SK-N-SH (cell line): ENCODE measurements at regions of chr12 and their contacts with region 1.

Region 1: GRCh38 chr12:113462117-113462774 is 9.4 kb downstream of the LHX5 start:
- DNase-seq: peak; percentile 87
- H3K4me3 ChIP-seq: peak overlapping the region; percentile 18 to 44; a peak in 3 of 4 replicates
- H3K27ac ChIP-seq: no peak overlapping the region
- H3K4me1 ChIP-seq: no peaks in the 10 kb centered on the region; a peak in 1 of 4 replicates
- H3K27me3 ChIP-seq: peaks cover 65% of the 10 kb centered on the region
- CTCF ChIP-seq: peak; percentile 82
- EP300 ChIP-seq: no peak
- RAD21 ChIP-seq: peak; percentile 75

Region 2: DNA sequence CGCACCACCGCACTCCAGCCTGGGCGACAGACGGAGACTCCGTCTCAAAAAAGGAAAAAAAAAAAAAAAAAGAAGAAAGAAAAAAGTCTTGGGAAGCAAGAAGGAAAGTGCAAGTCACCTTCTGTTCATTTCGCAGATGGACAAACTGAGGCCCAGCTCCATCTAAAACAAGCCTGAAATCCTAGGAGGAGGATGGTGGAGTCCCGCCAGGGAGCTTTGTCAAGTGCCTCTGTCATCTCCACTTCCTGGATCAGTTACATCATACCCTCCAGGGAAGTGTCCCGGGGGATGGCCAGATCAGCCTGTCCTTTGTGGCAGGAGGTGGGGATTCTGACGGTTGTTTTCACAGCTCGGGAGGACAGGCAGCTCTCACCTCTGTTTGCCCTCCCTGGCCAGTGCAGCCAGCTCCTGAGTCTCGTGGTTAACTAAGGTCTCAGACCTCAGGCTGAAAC is 48.7 kb before region 1 on chr12:
- CTCF ChIA-PET with region 1: no interaction called
- POLR2A ChIA-PET with region 1: no interaction called
- DNase-seq: no peak
- H3K4me3 ChIP-seq: no peak overlapping the region
- H3K27ac ChIP-seq: no peak overlapping the region
- H3K4me1 ChIP-seq: no peaks in the 10 kb centered on the region
- H3K27me3 ChIP-seq: no peaks in the 10 kb centered on the region
- CTCF ChIP-seq: no peak
- EP300 ChIP-seq: no peak
- RAD21 ChIP-seq: no peak

Region 3: DNA sequence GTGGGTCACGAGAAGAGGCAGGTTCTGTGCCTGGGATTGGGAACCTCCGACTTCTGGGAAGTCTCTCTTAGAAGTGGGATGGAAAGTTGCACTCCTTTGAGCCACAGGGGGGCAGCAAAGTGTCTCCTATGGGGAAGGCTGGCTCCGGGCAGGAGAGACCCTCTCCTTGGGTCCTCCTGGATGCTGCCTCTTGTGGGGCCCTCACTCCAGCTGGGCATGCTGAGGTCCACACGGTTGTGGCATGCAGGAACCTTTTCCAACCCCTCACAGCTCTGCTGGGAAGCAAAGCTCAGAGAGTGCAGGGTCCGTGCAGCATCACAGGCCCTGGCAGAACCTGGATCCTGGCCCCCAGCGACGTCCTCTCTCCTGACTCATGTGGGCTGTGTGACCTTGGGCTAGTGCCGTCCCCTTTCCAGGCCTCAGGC is 22.6 kb before region 1 on chr12:
- CTCF ChIA-PET with region 1: interaction called, 23 read pairs
- POLR2A ChIA-PET with region 1: no interaction called
- DNase-seq: peak; percentile 80
- H3K4me3 ChIP-seq: no peak overlapping the region
- H3K27ac ChIP-seq: no peak overlapping the region
- H3K4me1 ChIP-seq: no peaks in the 10 kb centered on the region
- H3K27me3 ChIP-seq: no peaks in the 10 kb centered on the region
- CTCF ChIP-seq: peak; percentile 72
- EP300 ChIP-seq: no peak
- RAD21 ChIP-seq: peak; percentile 76

Region 4: GRCh38 chr12:113445544-113446171 is 16.6 kb before region 1 on chr12:
- CTCF ChIA-PET with region 1: interaction called, 23 read pairs
- POLR2A ChIA-PET with region 1: no interaction called
- DNase-seq: no peak
- H3K4me3 ChIP-seq: no peak overlapping the region
- H3K27ac ChIP-seq: no peak overlapping the region
- H3K4me1 ChIP-seq: no peaks in the 10 kb centered on the region
- H3K27me3 ChIP-seq: no peaks in the 10 kb centered on the region; the same call in 1 of the 2 replicates
- CTCF ChIP-seq: no peak
- EP300 ChIP-seq: no peak
- RAD21 ChIP-seq: no peak

Region 5: GRCh38 chr12:113479590-113480335 is 17.5 kb after region 1 on chr12:
- CTCF ChIA-PET with region 1: interaction called, 44 read pairs
- POLR2A ChIA-PET with region 1: no interaction called
- DNase-seq: peak; percentile 51
- H3K4me3 ChIP-seq: peak overlapping the region in 1 of 2 experiments; percentile 5; a peak in 1 of 4 replicates
- H3K27ac ChIP-seq: no peak overlapping the region
- H3K4me1 ChIP-seq: no peaks in the 10 kb centered on the region; a peak in 1 of 4 replicates
- H3K27me3 ChIP-seq: peaks cover 51% of the 10 kb centered on the region
- CTCF ChIP-seq: no peak
- EP300 ChIP-seq: no peak
- RAD21 ChIP-seq: no peak

Region 6: DNA sequence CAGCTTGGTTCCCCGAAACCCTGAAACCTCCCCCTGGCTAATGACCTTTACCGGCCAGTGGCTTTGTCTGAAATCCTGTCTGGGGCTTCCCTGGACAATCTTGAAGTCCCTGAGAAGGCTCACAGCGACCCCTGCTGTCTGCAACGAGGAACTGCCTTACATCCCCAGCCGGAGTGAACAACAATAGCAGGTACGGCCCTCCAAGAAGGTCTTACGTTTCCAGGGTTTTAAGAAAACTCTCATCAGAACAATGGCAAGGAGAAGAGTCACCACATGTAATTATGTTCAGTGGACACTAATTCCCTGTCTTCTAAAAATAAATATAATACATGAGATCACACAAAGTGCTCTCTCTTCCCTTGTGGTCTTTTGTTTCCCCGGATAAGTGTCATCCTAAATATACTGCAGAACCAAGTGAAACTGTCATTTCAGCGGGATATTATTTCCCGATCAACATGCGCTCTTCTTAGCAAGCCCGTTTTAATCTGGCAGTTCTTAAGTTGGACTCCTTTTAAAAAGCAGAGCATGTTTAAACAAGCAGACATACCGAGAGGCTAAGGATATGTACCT is 450.6 kb after region 1 on chr12:
- CTCF ChIA-PET with region 1: interaction called, 24 read pairs
- POLR2A ChIA-PET with region 1: no interaction called
- DNase-seq: peak; percentile 82
- H3K4me3 ChIP-seq: no peak overlapping the region
- H3K27ac ChIP-seq: no peak overlapping the region
- H3K4me1 ChIP-seq: no peaks in the 10 kb centered on the region
- H3K27me3 ChIP-seq: no peaks in the 10 kb centered on the region
- CTCF ChIP-seq: peak; percentile 97
- EP300 ChIP-seq: no peak
- RAD21 ChIP-seq: peak; percentile 97

Region 7: GRCh38 chr12:113919791-113920190 is 457.5 kb after region 1 on chr12:
- CTCF ChIA-PET with region 1: interaction called, 15 read pairs
- POLR2A ChIA-PET with region 1: no interaction called
- DNase-seq: no peak
- H3K4me3 ChIP-seq: no peak overlapping the region
- H3K27ac ChIP-seq: no peak overlapping the region
- H3K4me1 ChIP-seq: no peaks in the 10 kb centered on the region
- H3K27me3 ChIP-seq: no peaks in the 10 kb centered on the region
- CTCF ChIP-seq: no peak
- EP300 ChIP-seq: no peak
- RAD21 ChIP-seq: no peak